ENCODE measurements at regions of chr9 and their contacts with region 1.

Region 1: GRCh38 chr9:109110326-109111021 is 9.3 kb downstream of the TMEM245 start:
- DNase-seq: peak in 4 of 14 experiments; percentile 14 to 82 (median 74)
- ATAC-seq: peak; percentile 80
- H3K4me3 ChIP-seq: peak overlapping the region; percentile 31
- H3K4me3 Mint-ChIP-seq: peak overlapping the region; percentile 61
- H3K27ac ChIP-seq: peak overlapping the region; percentile 39 to 76
- H3K27ac Mint-ChIP-seq: peak overlapping the region; percentile 90
- H3K4me1 ChIP-seq: peaks cover 37% of the 10 kb centered on the region
- H3K4me1 Mint-ChIP-seq: peaks cover 86% of the 10 kb centered on the region
- H3K27me3 ChIP-seq: no peaks in the 10 kb centered on the region
- H3K27me3 Mint-ChIP-seq: no peaks in the 10 kb centered on the region
- CTCF ChIP-seq: no peak

Region 2: DNA sequence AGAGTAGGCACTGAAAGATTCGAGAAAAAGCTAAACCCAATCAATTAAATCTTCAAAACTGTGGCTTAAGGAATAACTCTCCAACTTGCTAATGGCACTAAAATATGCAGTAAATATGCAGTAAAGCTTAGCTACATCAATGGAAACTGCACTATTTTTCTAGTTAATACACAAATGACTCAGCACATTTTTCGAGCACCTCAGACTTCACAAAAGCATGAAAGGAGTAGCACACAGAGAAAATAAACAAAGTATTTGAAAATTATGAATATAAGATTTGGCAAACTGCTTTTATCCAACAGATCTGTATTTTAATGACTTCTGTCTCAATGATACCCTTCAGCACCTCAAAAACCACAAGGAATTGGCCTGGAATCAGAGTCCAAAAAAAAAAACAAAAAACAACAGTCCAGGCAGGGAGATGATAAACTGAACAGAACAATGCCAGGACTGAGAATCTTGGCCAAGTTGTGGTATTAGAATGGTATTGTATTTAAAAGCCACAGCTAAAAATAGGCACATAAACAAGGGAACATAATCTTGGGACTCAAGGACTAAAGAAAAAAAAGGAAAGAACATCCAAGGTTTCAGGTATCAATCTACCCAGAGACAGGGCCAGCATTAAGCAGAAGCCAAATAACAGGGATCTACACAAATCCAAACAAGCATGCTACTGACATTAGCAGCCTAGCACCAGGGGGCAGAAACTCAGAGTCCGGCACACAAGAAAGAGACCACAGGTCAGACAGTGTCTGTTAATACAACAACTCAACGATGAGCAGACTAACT is 12.1 kb before region 1 on chr9:
- CTCF ChIA-PET with region 1: no interaction called
- POLR2A ChIA-PET with region 1: interaction called, 5 read pairs
- intact Hi-C with region 1: loop called in 1 of 2 experiments (anchors 1 kb)
- DNase-seq: no peak
- ATAC-seq: no peak
- H3K4me3 ChIP-seq: no peak overlapping the region
- H3K4me3 Mint-ChIP-seq: peak overlapping the region; percentile 11
- H3K27ac ChIP-seq: no peak overlapping the region
- H3K27ac Mint-ChIP-seq: peak overlapping the region; percentile 69
- H3K4me1 ChIP-seq: peaks cover 52% of the 10 kb centered on the region
- H3K4me1 Mint-ChIP-seq: peaks cover 95% of the 10 kb centered on the region
- H3K27me3 ChIP-seq: no peaks in the 10 kb centered on the region
- H3K27me3 Mint-ChIP-seq: no peaks in the 10 kb centered on the region
- CTCF ChIP-seq: no peak

Measured in CD4-positive, alpha-beta T cell (primary cell).